GM23248 (cell line): ENCODE measurements at regions of chr9 and their contacts with region 1.

Region 1: DNA sequence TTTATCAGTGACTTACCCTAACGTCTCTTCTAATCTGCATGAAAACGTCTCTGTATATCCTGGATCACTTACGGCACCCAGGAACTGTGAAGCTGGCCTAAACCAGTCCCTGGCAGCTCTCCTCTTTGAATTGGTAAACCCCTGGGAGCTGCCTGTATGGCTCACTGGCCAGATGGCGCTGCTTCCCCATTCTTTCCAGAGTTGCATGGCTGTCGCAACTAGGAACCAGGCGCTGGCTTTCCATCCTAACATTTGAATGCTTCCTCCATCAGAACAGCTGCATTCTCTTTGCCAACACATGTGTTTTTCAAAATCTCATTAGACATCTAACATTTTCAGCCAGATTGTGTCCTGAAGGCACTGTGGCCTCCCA is 8.0 kb upstream of the PCA3 start:
- DNase-seq: peak; percentile 68
- H3K4me3 ChIP-seq: no peak overlapping the region
- H3K27ac ChIP-seq: no peak overlapping the region
- H3K4me1 ChIP-seq: 0 out of 2 replicates have a peak, but pooled peaks cover 3% of the 10 kb centered on the region
- H3K27me3 ChIP-seq: no peaks in the 10 kb centered on the region

Region 2: GRCh38 chr9:76194896-76195295 is 561.4 kb before region 1 on chr9:
- in situ Hi-C with region 1: no loop called
- DNase-seq: peak; percentile 70
- H3K4me3 ChIP-seq: no peak overlapping the region
- H3K27ac ChIP-seq: peak overlapping the region; percentile 49
- H3K4me1 ChIP-seq: peaks cover 9% of the 10 kb centered on the region
- H3K27me3 ChIP-seq: no peaks in the 10 kb centered on the region

Region 3: GRCh38 chr9:76866689-76867088 is 110.4 kb after region 1 on chr9:
- in situ Hi-C with region 1: loop called (anchors 25 kb)
- DNase-seq: peak; percentile 94
- H3K4me3 ChIP-seq: no peak overlapping the region
- H3K27ac ChIP-seq: peak overlapping the region; percentile 65
- H3K4me1 ChIP-seq: peaks cover 31% of the 10 kb centered on the region
- H3K27me3 ChIP-seq: no peaks in the 10 kb centered on the region